ENCODE measurements at regions of chr19 and their contacts with region 1.

Region 1: GRCh38 chr19:42028304-42029216 is 34.5 kb upstream of the ATP1A3 start:
- DNase-seq: peak; percentile 44 to 98
- H3K4me3 ChIP-seq: peak overlapping the region; percentile 25 to 59 (median 40); a peak in 6 of 8 replicates
- H3K27ac ChIP-seq: peak overlapping the region; percentile 0; the same call in 1 of the 2 replicates
- H3K4me1 ChIP-seq: peaks cover 0 to 7% (median 5%) of the 10 kb centered on the region in 4 experiments; a peak in 5 of 7 replicates
- H3K27me3 ChIP-seq: no peaks in the 10 kb centered on the region
- CTCF ChIP-seq: peak; percentile 89 to 100 (median 100)
- EP300 ChIP-seq: no peak
- POLR2A ChIP-seq: no peak
- RAD21 ChIP-seq: peak; percentile 36 to 49

Region 2: DNA sequence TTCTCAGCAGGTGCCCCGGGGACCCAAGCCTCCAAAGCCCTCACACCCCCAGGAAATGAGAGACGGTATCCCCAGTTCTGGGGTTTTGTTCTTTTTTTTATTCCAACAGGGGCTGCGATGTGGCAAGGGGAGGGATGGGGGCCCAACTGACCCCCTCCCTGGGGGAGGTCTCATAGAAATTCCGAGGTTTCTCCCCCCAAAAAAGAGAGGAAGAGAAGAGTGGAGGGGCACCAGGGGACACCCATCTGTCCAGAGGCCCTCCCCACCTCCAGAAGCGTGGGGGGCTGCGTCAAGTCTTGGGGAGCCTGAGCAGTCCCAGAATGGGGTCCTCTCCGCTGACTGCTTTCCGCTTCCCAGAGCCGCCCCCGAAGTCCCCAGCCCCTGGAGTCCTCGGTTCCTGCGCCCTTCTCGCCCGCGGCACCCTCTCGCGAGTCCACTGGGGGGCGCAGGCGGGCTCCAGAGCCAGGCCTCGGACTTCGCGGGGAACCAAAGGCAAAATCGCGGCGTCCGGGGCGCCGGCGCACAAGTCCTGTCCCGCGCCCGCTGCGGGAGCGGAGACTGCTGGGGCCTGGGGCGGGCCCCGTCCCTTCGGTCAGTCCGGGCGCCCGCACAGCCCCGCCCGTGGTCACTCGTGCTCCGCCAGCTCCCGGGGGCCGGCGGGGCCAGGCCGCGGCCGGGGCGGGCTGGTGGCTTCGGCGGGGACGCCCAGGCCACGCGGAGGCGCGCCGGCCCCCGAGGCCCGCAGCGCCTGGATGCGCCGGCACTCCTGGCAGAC is 30.1 kb before region 1 on chr19:
- CTCF ChIA-PET with region 1: interaction called, 27 read pairs
- POLR2A ChIA-PET with region 1: interaction called, 4 read pairs
- DNase-seq: peak in 1 of 2 experiments; percentile 91
- H3K4me3 ChIP-seq: peak overlapping the region in 2 of 4 experiments; percentile 29 to 46; a peak in 6 of 8 replicates
- H3K27ac ChIP-seq: no peak overlapping the region
- H3K4me1 ChIP-seq: peaks cover 0 to 19% (median 7%) of the 10 kb centered on the region in 4 experiments; a peak in 5 of 7 replicates
- H3K27me3 ChIP-seq: peaks cover 13 to 68% (median 58%) of the 10 kb centered on the region in 4 experiments
- CTCF ChIP-seq: peak; percentile 79 to 88 (median 82)
- EP300 ChIP-seq: no peak
- POLR2A ChIP-seq: no peak; a peak in 1 of 3 replicates
- RAD21 ChIP-seq: peak; percentile 51 to 74

Region 3: GRCh38 chr19:42010245-42011126 is 18.1 kb before region 1 on chr19:
- CTCF ChIA-PET with region 1: interaction called, 58 read pairs
- POLR2A ChIA-PET with region 1: interaction called, 3 read pairs
- DNase-seq: no peak
- H3K4me3 ChIP-seq: no peak overlapping the region
- H3K27ac ChIP-seq: no peak overlapping the region
- H3K4me1 ChIP-seq: no peaks in the 10 kb centered on the region
- H3K27me3 ChIP-seq: no peaks in the 10 kb centered on the region
- CTCF ChIP-seq: no peak
- EP300 ChIP-seq: no peak
- POLR2A ChIP-seq: no peak
- RAD21 ChIP-seq: no peak

Region 4: GRCh38 chr19:42038666-42039065 is 10.1 kb after region 1 on chr19:
- CTCF ChIA-PET with region 1: interaction called, 26 read pairs
- POLR2A ChIA-PET with region 1: interaction called, 9 read pairs
- DNase-seq: no peak
- H3K4me3 ChIP-seq: no peak overlapping the region
- H3K27ac ChIP-seq: no peak overlapping the region
- H3K4me1 ChIP-seq: no peaks in the 10 kb centered on the region
- H3K27me3 ChIP-seq: no peaks in the 10 kb centered on the region
- CTCF ChIP-seq: no peak
- EP300 ChIP-seq: no peak
- POLR2A ChIP-seq: no peak
- RAD21 ChIP-seq: no peak

Region 5: GRCh38 chr19:42048992-42049391 is 20.4 kb after region 1 on chr19:
- CTCF ChIA-PET with region 1: interaction called, 23 read pairs
- POLR2A ChIA-PET with region 1: interaction called, 4 read pairs
- DNase-seq: no peak
- H3K4me3 ChIP-seq: no peak overlapping the region
- H3K27ac ChIP-seq: no peak overlapping the region
- H3K4me1 ChIP-seq: no peaks in the 10 kb centered on the region
- H3K27me3 ChIP-seq: no peaks in the 10 kb centered on the region
- CTCF ChIP-seq: no peak
- EP300 ChIP-seq: no peak
- POLR2A ChIP-seq: no peak
- RAD21 ChIP-seq: no peak

Region 6: GRCh38 chr19:42154471-42155323 is 126.1 kb after region 1 on chr19:
- CTCF ChIA-PET with region 1: no interaction called
- POLR2A ChIA-PET with region 1: no interaction called
- DNase-seq: no peak
- H3K4me3 ChIP-seq: no peak overlapping the region; a peak in 1 of 8 replicates
- H3K27ac ChIP-seq: no peak overlapping the region
- H3K4me1 ChIP-seq: peaks cover 0 to 37% (median 21%) of the 10 kb centered on the region in 4 experiments; a peak in 6 of 7 replicates
- H3K27me3 ChIP-seq: peaks cover 0 to 11% (median 7%) of the 10 kb centered on the region in 4 experiments; a peak in 4 of 7 replicates
- CTCF ChIP-seq: no peak
- EP300 ChIP-seq: no peak
- POLR2A ChIP-seq: no peak
- RAD21 ChIP-seq: no peak